ENCODE measurements at regions of chr19 and their contacts with region 1.

Region 1: DNA sequence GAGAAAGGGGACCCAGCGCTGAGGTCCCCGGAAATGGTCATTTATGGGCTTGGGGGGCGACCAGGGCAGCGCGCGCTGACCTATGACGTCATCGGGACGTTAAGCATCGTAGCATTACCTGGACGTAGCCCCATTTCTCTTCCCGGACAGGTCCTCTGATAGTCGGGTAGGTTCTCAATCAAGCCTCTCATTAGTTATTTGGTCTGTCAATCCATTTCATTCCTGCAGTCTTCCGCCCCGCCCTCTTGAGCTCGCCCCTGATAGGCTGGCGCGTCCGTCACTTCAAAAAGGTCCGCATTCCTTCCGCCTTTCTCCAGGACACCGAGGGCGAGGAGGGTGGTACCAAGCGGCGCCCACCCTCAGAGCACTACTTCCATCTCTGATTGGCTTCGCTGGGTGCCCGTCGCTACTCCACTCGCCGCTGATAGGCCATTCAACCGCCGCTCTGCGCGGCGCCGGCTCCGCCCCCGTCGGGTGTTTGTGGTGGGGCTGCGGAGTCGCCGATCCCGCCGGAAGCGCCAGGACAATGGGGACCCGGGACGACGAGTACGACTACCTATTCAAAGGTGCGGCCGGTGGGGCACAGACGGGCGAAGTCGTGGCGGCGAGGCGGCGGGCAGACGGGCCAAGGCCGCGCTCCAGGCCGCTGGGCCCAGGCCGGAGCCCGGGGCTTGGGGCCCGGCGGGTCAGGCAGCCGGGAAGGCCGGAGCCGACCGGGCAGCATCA is at the start of gene RAB11B:
- DNase-seq: peak; percentile 100
- ATAC-seq: peak; percentile 86
- H3K4me3 ChIP-seq: peak within 1 kb of the TSS; percentile 54 to 89 (median 82)
- H3K4me3 Mint-ChIP-seq: peak within 1 kb of the TSS; percentile 95
- H3K27ac ChIP-seq: peak within 1 kb of the TSS; percentile 70 to 96
- H3K27ac Mint-ChIP-seq: peak within 1 kb of the TSS; percentile 98
- H3K4me1 ChIP-seq: peaks cover 10 to 20% of the 10 kb centered on the region in 2 donors
- H3K4me1 Mint-ChIP-seq: peaks cover 29% of the 10 kb centered on the region
- H3K27me3 ChIP-seq: no peaks in the 10 kb centered on the region
- H3K27me3 Mint-ChIP-seq: no peaks in the 10 kb centered on the region
- CTCF ChIP-seq: no peak
- total RNA-seq, gene RAB11B: 126 and 130 TPM in 2 replicates

Region 2: DNA sequence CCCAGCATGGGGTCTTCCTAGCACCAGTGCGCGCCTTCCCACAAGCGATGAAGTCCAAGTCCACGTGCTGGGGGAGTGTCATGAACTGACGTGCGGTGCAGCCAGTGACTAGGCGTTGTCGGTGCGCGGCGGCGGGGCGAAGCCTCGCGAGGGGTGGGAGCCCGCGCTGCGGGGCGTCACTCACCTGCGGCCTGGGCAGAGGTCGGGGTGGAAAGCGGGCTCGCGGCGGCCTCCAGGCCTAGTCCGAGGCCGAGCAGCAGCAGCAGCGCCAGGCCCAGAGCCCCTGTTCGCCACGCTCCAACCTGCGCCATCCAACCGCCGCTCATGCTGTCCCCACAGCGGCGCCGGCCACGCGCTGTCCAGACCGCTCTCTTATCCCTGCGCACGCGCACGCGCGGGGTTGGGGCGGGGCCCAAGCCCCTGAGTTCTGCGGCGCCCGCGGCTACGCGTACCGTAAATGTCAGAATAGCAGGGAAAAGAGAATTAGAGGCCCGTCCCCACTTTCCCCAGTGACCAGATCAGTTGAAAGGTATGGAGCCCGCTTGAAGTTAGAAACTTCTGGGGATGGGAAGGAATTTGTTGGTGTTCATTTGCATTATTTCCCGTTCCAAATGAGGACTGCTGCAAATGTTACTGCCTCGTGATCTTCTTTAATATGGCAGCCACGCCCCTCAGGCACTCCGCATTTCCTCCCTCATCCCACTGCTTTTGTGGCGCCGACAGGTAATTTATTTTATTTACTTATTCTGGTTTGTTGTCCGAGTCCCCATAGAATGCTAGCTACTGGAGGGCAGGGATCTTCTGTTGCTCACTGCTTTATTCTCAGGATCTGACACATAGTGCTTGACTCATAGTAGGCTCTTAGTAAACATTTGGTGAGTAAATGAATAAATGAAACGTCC is 81.8 kb before region 1 on chr19 and contains the start of gene CD320:
- CTCF ChIA-PET with region 1: no interaction called
- POLR2A ChIA-PET with region 1: no interaction called
- intact Hi-C with region 1: loop called (anchors 1 kb)
- DNase-seq: peak; percentile 94
- ATAC-seq: peak; percentile 91
- H3K4me3 ChIP-seq: peak within 1 kb of the TSS; percentile 44 to 68 (median 66)
- H3K4me3 Mint-ChIP-seq: peak within 1 kb of the TSS; percentile 93
- H3K27ac ChIP-seq: peak within 1 kb of the TSS in 1 of 2 donors; percentile 49
- H3K27ac Mint-ChIP-seq: peak within 1 kb of the TSS; percentile 87
- H3K4me1 ChIP-seq: peaks cover 7 to 18% of the 10 kb centered on the region in 2 donors
- H3K4me1 Mint-ChIP-seq: peaks cover 24% of the 10 kb centered on the region
- H3K27me3 ChIP-seq: no peaks in the 10 kb centered on the region
- H3K27me3 Mint-ChIP-seq: no peaks in the 10 kb centered on the region
- CTCF ChIP-seq: no peak
- total RNA-seq, gene CD320: 28.7 and 30.5 TPM in 2 replicates

Region 3: GRCh38 chr19:8444645-8445487 is 54.8 kb after region 1 on chr19 and contains the start of gene HNRNPM:
- CTCF ChIA-PET with region 1: no interaction called
- POLR2A ChIA-PET with region 1: interaction called, 6 read pairs
- intact Hi-C with region 1: loop called (anchors 1 kb)
- DNase-seq: peak; percentile 99
- ATAC-seq: peak; percentile 92
- H3K4me3 ChIP-seq: peak within 1 kb of the TSS; percentile 65 to 97 (median 97)
- H3K4me3 Mint-ChIP-seq: peak within 1 kb of the TSS; percentile 94
- H3K27ac ChIP-seq: peak within 1 kb of the TSS; percentile 89 to 97
- H3K27ac Mint-ChIP-seq: peak within 1 kb of the TSS; percentile 98
- H3K4me1 ChIP-seq: peaks cover 38 to 47% of the 10 kb centered on the region in 2 donors
- H3K4me1 Mint-ChIP-seq: peaks cover 37% of the 10 kb centered on the region
- H3K27me3 ChIP-seq: no peaks in the 10 kb centered on the region
- H3K27me3 Mint-ChIP-seq: no peaks in the 10 kb centered on the region
- CTCF ChIP-seq: no peak
- total RNA-seq, gene HNRNPM: 207 and 221 TPM in 2 replicates